Gastrocnemius medialis (tissue), 4 donors: ENCODE measurements at regions of chr4 and their contacts with region 1.

Region 1: DNA sequence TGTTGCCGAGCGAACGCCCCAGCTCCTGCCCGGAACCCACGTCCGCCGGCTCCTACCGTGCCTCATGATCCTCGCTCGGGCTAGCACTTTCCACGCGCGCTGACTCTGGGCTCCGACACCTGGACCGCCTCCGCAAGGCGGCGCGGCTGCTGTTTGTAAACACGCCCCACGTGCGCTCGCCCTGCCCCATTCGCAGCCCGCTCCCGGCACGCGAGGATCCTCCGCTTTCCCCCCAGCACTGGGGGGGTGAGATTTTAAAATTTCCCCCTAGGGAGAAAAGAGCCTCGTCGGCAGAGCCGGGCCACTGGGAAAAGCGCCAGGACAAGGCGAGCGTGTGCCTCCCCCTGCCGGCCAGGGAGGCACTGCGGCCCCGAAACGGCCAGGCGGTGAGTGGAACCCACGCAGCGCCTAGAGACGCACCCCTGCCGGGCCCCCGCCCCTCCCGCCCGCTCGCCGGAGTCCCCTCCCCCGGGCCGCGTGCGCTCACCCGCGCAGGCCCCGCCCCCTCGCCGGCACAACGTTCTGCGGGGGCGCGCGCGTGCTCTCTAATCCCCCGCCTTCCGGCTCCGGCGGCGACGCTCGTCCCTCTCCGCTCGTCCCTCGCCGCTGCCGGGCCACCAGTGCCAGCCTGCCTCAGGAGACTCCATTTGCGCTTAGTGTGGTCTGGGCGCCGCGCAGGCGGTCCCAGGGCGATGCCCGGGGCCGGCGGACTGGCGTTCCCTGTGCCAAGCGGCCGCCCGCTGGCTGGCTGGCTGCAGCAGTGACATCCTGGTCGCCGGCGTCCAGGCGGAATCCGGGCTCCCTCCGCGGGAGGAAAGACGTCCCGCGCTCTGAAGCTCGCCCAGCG is at the start of gene TIGD2:
- DNase-seq: peak; percentile 78 to 83
- ATAC-seq: peak; percentile 87 to 91
- H3K4me3 ChIP-seq: peak within 1 kb of the TSS; percentile 71 to 95 (median 88)
- H3K27ac ChIP-seq: peak within 1 kb of the TSS; percentile 87 to 94 (median 92)
- H3K4me1 ChIP-seq: peaks cover 9 to 13% of the 10 kb centered on the region in 2 donors
- H3K27me3 ChIP-seq: no peaks in the 10 kb centered on the region
- CTCF ChIP-seq: peak; percentile 82 to 88 (median 87)
- POLR2A ChIP-seq: peak; percentile 75 to 76
- total RNA-seq, gene TIGD2: 1.7 to 2.8 (median 2.4) TPM

Region 2: DNA sequence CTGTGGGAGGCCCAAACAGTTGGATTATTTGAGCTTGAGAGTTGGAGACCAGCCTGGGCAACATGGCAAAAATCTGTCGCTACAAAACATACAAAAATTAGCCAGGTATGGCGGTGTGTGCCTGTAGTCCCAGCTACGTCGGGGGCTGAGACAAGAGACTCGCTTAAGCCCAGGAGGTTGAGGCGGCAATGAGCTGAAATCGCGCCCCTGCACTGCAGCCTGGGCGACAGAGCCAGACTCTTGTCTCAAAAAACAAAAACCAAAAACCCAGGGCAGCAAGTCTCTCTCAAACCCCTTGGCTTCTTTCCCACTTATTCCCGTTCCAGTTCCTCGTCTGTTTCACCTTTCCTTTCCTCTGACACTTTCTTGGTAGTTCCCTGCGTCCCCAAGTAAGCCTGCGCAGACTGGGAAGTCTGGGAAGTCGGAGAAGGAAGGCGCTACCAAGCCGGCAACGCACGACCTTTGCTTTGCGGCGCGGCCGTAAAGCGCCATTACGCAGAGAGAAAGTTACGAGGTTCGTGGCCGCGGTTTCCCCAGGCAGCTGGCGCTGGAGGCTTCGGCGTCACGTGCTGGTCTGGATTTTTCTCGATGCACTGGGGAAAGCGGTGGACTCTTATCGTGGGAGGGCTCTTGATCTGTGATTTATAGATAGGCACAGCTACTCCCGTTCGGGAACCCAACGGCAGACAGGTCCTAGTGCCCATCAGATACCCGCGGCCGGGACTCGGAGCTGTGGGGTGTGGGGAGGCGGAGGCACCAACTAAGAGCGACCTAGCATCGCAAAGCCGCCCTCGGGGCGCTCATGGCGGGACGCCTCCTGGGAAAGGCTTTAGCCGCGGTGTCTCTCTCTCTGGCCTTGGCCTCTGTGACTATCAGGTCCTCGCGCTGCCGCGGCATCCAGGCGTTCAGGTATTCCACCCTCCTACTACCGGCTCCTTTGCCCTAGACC is 1688.8 kb before region 1 on chr4 and contains the start of gene NUDT9:
- in situ Hi-C with region 1: no loop called
- intact Hi-C with region 1: loop called (anchors 5 kb)
- DNase-seq: peak; percentile 93 to 96
- ATAC-seq: peak; percentile 98
- H3K4me3 ChIP-seq: peak within 1 kb of the TSS; percentile 60 to 93 (median 66)
- H3K27ac ChIP-seq: peak within 1 kb of the TSS; percentile 88 to 94 (median 92)
- H3K4me1 ChIP-seq: peaks cover 15 to 23% of the 10 kb centered on the region in 2 donors
- H3K27me3 ChIP-seq: no peaks in the 10 kb centered on the region
- CTCF ChIP-seq: peak in 1 of 5 experiments; percentile 7
- POLR2A ChIP-seq: peak; percentile 66 to 73
- total RNA-seq, gene NUDT9: 13.4 to 16.7 (median 15.8) TPM

Region 3: DNA sequence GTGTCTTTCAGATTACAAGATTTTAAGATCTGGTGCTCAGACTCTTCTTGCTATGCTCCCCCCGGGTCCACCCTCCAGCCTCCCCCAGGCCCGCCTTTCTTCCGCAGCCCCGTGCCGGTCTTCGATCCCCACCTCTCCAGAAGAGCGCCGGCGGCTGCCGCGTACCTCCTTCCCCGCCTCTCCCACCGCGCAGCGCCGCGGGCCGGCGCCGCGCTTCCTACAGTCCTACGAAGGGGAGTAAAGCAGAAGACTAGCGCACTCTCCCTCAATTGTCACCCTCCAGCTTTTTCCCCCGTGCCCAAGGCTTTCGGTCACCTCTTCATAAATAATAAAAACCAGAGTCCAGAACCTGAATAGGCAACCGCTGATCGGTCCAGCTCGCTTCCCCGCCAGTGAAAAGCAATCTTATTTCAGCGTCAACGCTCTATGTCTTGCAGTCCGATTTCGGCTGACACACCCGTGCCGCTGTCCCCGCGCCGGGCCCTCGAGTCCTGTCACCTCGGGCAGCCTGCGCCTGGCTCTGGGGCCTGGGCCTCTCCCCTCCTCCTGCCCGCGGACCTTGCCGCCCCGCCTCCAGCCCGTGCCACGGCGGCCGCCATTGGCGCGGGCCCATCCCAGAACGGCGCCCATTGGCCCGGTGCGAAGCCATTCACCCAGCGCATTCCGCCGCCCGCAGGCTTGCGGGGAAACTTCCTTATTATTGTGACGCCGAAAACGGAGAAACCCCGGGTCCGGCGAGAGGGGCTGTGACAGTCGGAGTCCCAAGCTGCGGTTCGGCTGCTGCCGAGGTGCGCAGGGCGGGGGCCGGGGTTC is 519.2 kb before region 1 on chr4 and contains the start of gene HERC3:
- in situ Hi-C with region 1: no loop called
- intact Hi-C with region 1: loop called (anchors 5 kb)
- DNase-seq: peak; percentile 87 to 92
- ATAC-seq: peak; percentile 86 to 91
- H3K4me3 ChIP-seq: peak within 1 kb of the TSS; percentile 72 to 91 (median 82)
- H3K27ac ChIP-seq: peak within 1 kb of the TSS; percentile 91 to 95 (median 92)
- H3K4me1 ChIP-seq: peaks cover 18 to 26% of the 10 kb centered on the region in 2 donors
- H3K27me3 ChIP-seq: no peaks in the 10 kb centered on the region
- CTCF ChIP-seq: peak in 2 of 5 experiments; percentile 26 to 34
- POLR2A ChIP-seq: peak; percentile 59 to 68
- total RNA-seq, gene HERC3: 16.2 to 32.3 (median 21.9) TPM

Region 4: DNA sequence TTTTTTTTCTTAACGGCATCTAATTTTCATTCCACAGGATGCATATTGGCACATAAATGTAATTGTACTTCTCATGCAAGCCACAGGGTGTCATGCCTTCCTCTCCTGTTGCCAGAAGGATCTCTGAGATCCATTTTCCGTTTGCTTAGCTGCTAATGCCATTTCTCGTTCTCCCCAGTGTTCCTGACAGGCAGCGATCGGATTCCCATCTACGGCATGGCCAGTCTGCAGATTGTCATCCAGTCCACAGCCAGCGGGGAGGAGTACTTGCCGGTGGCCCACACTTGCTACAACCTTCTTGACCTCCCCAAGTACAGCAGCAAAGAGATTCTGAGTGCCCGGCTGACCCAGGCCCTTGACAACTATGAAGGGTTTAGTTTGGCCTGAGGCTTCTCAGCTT is 404.6 kb before region 1 on chr4:
- in situ Hi-C with region 1: no loop called
- intact Hi-C with region 1: loop called (anchors 10 kb)
- DNase-seq: peak; percentile 23 to 62
- ATAC-seq: peak; percentile 98
- H3K4me3 ChIP-seq: no peak overlapping the region
- H3K27ac ChIP-seq: peak overlapping the region; percentile 61 to 75 (median 70)
- H3K4me1 ChIP-seq: peaks cover 5 to 12% of the 10 kb centered on the region in 2 donors
- H3K27me3 ChIP-seq: no peaks in the 10 kb centered on the region
- CTCF ChIP-seq: peak; percentile 40 to 73 (median 62)
- POLR2A ChIP-seq: no peak

Region 5: DNA sequence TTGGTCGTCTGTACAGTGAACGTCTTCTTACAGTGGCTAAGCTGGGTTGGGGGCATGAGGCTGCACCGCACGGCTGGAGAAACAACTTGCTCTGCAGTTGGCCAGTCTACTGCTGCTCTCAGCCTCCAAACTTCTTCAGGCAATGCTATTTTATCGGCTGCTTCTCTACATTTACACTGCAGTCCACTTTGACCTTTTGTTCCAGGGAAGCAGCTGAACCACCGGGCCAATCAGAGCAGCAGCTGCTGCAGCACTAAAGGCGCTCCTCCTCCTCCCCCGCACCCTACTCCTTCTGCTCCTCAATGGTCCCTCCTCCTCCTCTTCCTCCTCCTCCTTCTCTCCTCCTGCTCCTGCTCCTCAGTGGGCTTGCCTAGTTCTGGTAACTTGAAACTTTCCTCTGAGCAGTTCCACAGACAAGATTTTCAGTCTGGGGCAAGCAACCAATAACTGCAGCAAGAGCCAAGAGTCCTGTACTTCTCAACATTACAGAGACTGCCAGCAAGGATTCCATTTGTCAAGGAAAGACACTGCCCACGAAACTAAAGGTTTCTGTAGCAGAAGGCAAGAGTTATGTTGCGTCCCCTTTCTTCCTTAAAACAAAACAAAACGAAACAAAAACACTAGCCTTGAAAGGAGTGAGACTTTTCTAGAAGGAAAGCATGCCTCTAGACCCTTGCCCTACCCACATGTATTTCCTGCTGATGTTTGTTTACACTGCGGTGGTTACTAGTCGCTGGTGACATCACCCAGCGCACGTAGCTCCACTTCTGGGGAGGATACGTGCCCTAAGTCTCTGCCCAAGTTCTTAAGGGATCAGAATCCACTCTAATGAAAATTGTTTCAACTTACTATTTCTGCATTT is 287.9 kb before region 1 on chr4:
- in situ Hi-C with region 1: no loop called
- intact Hi-C with region 1: loop called (anchors 2 kb)
- DNase-seq: peak; percentile 85 to 86
- ATAC-seq: peak; percentile 90 to 94
- H3K4me3 ChIP-seq: peak overlapping the region; percentile 45 to 65 (median 58)
- H3K27ac ChIP-seq: peak overlapping the region; percentile 81 to 85 (median 84)
- H3K4me1 ChIP-seq: peaks cover 34 to 44% of the 10 kb centered on the region in 2 donors
- H3K27me3 ChIP-seq: no peaks in the 10 kb centered on the region
- CTCF ChIP-seq: no peak
- POLR2A ChIP-seq: peak; percentile 49 to 82

Region 6: GRCh38 chr4:89024051-89024675 is 87.0 kb before region 1 on chr4:
- in situ Hi-C with region 1: no loop called
- intact Hi-C with region 1: loop called (anchors 2 kb)
- DNase-seq: peak; percentile 31 to 42
- ATAC-seq: peak; percentile 97 to 100
- H3K4me3 ChIP-seq: no peak overlapping the region
- H3K27ac ChIP-seq: no peak overlapping the region
- H3K4me1 ChIP-seq: peaks cover 8 to 15% of the 10 kb centered on the region in 2 donors
- H3K27me3 ChIP-seq: no peaks in the 10 kb centered on the region
- CTCF ChIP-seq: peak; percentile 83 to 92 (median 86)
- POLR2A ChIP-seq: no peak

Region 7: DNA sequence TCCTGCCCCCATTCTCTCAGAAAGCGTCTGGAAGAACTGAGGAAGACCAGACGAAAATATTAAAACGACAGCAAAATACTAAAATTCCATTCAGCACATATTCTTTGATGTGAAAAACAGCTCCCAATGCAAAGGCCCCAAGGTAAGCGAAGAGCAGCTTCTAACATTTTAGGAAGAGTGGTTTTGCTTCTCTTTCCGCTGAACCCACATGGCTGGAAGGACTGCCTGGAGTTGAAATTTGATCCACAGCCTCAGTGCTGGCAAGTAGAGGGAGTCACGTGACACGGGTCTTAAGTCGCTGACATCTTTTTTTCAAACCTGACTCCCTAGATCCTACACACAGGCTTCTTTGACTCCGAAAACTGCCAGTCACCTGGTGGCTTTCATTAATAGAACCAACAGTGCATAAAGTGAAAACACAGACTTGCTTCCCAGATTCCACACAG is 54.2 kb before region 1 on chr4 and contains the start of gene FAM13A:
- in situ Hi-C with region 1: loop called in 1 of 4 experiments (anchors 10 kb)
- intact Hi-C with region 1: loop called (anchors 1 kb)
- DNase-seq: peak; percentile 81 to 91
- ATAC-seq: peak; percentile 100
- H3K4me3 ChIP-seq: peak within 1 kb of the TSS; percentile 47 to 57 (median 57)
- H3K27ac ChIP-seq: peak within 1 kb of the TSS; percentile 68 to 82 (median 76)
- H3K4me1 ChIP-seq: peaks cover 20 to 32% of the 10 kb centered on the region in 2 donors
- H3K27me3 ChIP-seq: no peaks in the 10 kb centered on the region
- CTCF ChIP-seq: peak in 1 of 5 experiments; percentile 18
- POLR2A ChIP-seq: no peak
- total RNA-seq, gene FAM13A: 6.7 to 14.1 (median 11.4) TPM

Region 8: DNA sequence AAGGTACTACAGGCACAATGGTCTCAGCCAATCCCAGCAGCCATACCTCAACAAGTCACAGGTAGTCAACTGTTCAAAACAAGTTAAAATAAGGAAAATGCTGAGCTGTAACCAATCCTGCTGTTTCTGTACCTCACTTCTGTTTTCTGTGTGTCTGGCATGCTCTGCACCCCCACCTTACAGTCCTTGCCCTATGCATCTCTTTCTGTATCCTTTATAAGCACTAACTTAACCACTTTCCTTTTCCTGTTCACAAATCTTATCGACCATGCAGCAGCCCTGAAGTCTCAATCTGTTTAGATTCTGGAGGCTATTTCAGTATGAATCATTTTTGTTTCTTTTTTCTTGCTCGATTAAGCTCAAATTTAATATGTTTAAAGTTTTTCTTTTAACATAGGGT is 41.7 kb before region 1 on chr4:
- in situ Hi-C with region 1: no loop called
- intact Hi-C with region 1: no loop called
- DNase-seq: no peak
- ATAC-seq: no peak
- H3K4me3 ChIP-seq: no peak overlapping the region
- H3K27ac ChIP-seq: no peak overlapping the region
- H3K4me1 ChIP-seq: no peaks in the 10 kb centered on the region
- H3K27me3 ChIP-seq: no peaks in the 10 kb centered on the region
- CTCF ChIP-seq: no peak
- POLR2A ChIP-seq: no peak